ENCODE measurements at regions of chr1 and their contacts with region 1.

Region 1: GRCh38 chr1:233138788-233139585 is 156.5 kb downstream of the PCNX2 start:
- DNase-seq: peak; percentile 80
- H3K4me3 ChIP-seq: no peak overlapping the region
- H3K27ac ChIP-seq: no peak overlapping the region
- H3K4me1 ChIP-seq: peaks cover 3% of the 10 kb centered on the region
- H3K27me3 ChIP-seq: no peaks in the 10 kb centered on the region
- CTCF ChIP-seq: no peak

Region 2: DNA sequence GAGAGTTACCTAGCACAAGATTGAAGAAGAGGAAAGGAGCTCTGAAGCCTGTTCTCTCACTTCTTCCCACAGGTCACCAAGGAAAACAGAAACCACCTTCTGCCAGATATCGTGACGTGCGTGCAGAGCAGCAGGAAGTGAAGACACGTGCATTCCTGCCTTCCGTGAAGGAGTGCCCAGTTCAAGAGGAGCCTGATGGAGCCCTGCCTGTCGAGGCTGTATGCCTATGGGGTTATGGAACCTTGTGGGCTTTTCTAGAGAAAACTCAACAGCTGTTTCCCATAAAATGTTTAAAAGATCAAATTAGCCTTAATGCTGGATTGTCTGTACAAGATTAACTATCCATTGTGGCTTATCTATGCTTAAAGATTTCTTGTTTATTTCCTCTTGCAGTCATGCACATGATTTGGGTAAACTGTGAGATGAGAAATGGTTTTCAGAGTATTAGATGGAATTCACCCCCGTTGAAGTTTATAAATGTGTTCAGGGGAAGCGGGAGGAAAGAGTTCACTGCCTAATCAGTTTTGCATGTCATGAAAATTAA is 160.8 kb before region 1 on chr1:
- CTCF ChIA-PET with region 1: no interaction called
- POLR2A ChIA-PET with region 1: no interaction called
- intact Hi-C with region 1: no loop called
- DNase-seq: peak; percentile 15
- H3K4me3 ChIP-seq: no peak overlapping the region
- H3K27ac ChIP-seq: no peak overlapping the region
- H3K4me1 ChIP-seq: peaks cover 7% of the 10 kb centered on the region
- H3K27me3 ChIP-seq: no peaks in the 10 kb centered on the region
- CTCF ChIP-seq: no peak

Region 3: GRCh38 chr1:233113009-233113879 is 25.7 kb before region 1 on chr1:
- CTCF ChIA-PET with region 1: no interaction called
- POLR2A ChIA-PET with region 1: no interaction called
- intact Hi-C with region 1: loop called (anchors 1 kb)
- DNase-seq: peak; percentile 96
- H3K4me3 ChIP-seq: peak overlapping the region; percentile 21
- H3K27ac ChIP-seq: peak overlapping the region; percentile 86
- H3K4me1 ChIP-seq: peaks cover 28% of the 10 kb centered on the region
- H3K27me3 ChIP-seq: no peaks in the 10 kb centered on the region
- CTCF ChIP-seq: no peak